ENCODE measurements at regions of chr6 and their contacts with region 1.

Region 1: DNA sequence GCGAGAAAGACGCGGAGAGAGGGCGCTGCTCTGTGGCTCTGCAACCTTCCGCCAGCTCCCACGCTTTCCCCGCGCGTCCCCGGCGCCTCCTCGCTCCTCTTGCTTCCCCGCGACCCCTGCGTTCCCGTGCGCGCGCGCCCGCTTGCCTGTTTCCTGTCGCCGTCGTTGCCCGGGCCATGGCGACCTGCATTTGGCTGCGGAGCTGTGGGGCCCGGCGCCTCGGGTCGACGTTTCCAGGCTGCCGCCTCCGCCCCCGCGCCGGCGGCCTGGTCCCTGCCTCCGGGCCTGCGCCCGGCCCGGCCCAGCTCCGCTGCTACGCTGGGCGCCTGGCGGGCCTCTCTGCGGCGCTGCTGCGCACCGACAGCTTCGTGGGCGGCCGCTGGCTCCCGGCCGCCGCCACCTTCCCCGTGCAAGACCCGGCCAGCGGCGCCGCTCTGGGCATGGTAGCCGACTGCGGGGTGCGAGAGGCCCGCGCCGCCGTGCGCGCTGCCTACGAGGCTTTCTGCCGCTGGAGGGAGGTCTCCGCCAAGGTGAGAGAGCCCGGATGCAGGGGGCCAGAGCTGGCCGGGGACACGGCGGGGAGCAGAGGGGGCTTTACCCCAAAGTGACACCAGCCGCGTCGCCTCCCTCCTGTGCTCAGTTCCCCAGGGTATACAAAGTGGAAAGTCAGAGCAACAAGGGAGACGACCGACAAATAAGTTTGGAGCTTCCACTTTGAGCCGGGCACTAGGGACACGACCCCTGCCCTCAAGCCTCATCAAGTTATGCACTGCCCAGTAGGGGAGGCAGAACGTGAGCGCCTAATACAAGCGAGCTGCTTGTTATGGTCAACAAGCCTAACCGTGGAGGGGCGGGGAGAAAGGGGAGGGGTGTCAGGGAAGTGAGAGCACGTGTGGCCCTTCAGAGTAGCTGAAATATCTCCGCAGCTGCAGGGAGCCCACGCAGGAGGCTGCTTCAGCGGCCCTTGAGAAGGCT is at the start of gene ALDH5A1:
- DNase-seq: peak; percentile 77 to 80 (median 78)
- H3K4me3 ChIP-seq: peak within 1 kb of the TSS; percentile 64 to 75
- H3K4me3 Mint-ChIP-seq: peak within 1 kb of the TSS; percentile 85 to 90 (median 88)
- H3K27ac ChIP-seq: peak within 1 kb of the TSS; percentile 18
- H3K27ac Mint-ChIP-seq: peak within 1 kb of the TSS; percentile 37 to 88 (median 66)
- H3K4me1 ChIP-seq: peaks cover 18% of the 10 kb centered on the region
- H3K4me1 Mint-ChIP-seq: peaks cover 19 to 27% (median 25%) of the 10 kb centered on the region in 4 donors
- H3K27me3 ChIP-seq: no peaks in the 10 kb centered on the region
- H3K27me3 Mint-ChIP-seq: no peaks in the 10 kb centered on the region
- total RNA-seq, gene ALDH5A1: 13.0 to 13.9 TPM

Region 2: GRCh38 chr6:24481449-24481848 is 13.7 kb before region 1 on chr6:
- CTCF ChIA-PET with region 1: interaction called, 12 read pairs
- POLR2A ChIA-PET with region 1: no interaction called
- intact Hi-C with region 1: no loop called
- DNase-seq: no peak
- H3K4me3 ChIP-seq: no peak overlapping the region
- H3K4me3 Mint-ChIP-seq: no peak overlapping the region
- H3K27ac ChIP-seq: no peak overlapping the region
- H3K27ac Mint-ChIP-seq: no peak overlapping the region
- H3K4me1 ChIP-seq: no peaks in the 10 kb centered on the region
- H3K4me1 Mint-ChIP-seq: no peaks in the 10 kb centered on the region
- H3K27me3 ChIP-seq: no peaks in the 10 kb centered on the region
- H3K27me3 Mint-ChIP-seq: no peaks in the 10 kb centered on the region

Region 3: GRCh38 chr6:24520929-24521546 is 25.9 kb after region 1 on chr6:
- CTCF ChIA-PET with region 1: interaction called, 10 read pairs
- POLR2A ChIA-PET with region 1: interaction called, 9 read pairs
- intact Hi-C with region 1: loop called (anchors 2 kb)
- DNase-seq: peak in 3 of 5 donors; percentile 10 to 13 (median 13)
- H3K4me3 ChIP-seq: no peak overlapping the region
- H3K4me3 Mint-ChIP-seq: no peak overlapping the region
- H3K27ac ChIP-seq: no peak overlapping the region
- H3K27ac Mint-ChIP-seq: no peak overlapping the region
- H3K4me1 ChIP-seq: no peaks in the 10 kb centered on the region
- H3K4me1 Mint-ChIP-seq: no peaks in the 10 kb centered on the region
- H3K27me3 ChIP-seq: no peaks in the 10 kb centered on the region
- H3K27me3 Mint-ChIP-seq: no peaks in the 10 kb centered on the region

Region 4: GRCh38 chr6:24689964-24690363 is 194.9 kb after region 1 on chr6:
- CTCF ChIA-PET with region 1: no interaction called
- POLR2A ChIA-PET with region 1: no interaction called
- intact Hi-C with region 1: loop called (anchors 10 kb)
- DNase-seq: no peak
- H3K4me3 ChIP-seq: no peak overlapping the region
- H3K4me3 Mint-ChIP-seq: no peak overlapping the region
- H3K27ac ChIP-seq: no peak overlapping the region
- H3K27ac Mint-ChIP-seq: no peak overlapping the region
- H3K4me1 ChIP-seq: no peaks in the 10 kb centered on the region
- H3K4me1 Mint-ChIP-seq: peaks cover 0 to 8% (median 4%) of the 10 kb centered on the region in 4 donors
- H3K27me3 ChIP-seq: no peaks in the 10 kb centered on the region
- H3K27me3 Mint-ChIP-seq: no peaks in the 10 kb centered on the region

Measured in CD4-positive, alpha-beta memory T cell (primary cell).